Naive thymus-derived CD4-positive, alpha-beta T cell (primary cell): ENCODE measurements at regions of chr15 and their contacts with region 1.

Region 1: DNA sequence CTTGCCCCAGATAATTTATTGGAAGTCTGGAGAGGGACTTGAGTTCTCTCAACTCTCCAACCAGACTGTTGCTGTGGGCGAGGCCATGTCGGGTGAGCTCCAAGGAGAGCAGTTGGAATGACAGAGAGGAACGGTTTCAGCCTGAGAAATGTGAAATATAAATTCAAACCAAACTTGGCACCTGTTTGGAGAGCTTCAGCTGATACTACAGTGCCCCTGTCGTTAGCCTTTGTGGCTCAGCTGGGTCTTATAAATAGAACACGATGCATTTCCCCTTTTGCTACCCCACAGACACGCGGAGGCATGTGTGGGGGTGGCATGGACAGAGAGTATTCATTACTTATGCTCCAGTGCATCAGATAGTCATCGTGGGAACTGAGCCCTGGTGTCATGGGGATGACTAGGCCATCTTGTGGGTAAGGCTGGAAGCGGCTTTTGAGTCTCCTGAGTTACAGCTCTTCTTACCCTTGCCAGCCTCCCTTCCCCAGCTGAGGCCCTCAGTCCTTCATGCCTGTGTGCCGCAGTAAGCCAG is 15.6 kb downstream of the SMAD3 start:
- DNase-seq: peak in 1 of 9 donors; percentile 63
- ATAC-seq: peak; percentile 75
- H3K4me3 ChIP-seq: no peak overlapping the region
- H3K4me3 Mint-ChIP-seq: peak overlapping the region; percentile 6 to 98 (median 46)
- H3K27ac ChIP-seq: no peak overlapping the region
- H3K27ac Mint-ChIP-seq: peak overlapping the region; percentile 55 to 95 (median 81)
- H3K4me1 ChIP-seq: peaks cover 69 to 89% of the 10 kb centered on the region in 2 donors
- H3K4me1 Mint-ChIP-seq: peaks cover 56 to 96% (median 94%) of the 10 kb centered on the region in 7 donors
- H3K27me3 ChIP-seq: no peaks in the 10 kb centered on the region
- H3K27me3 Mint-ChIP-seq: no peaks in the 10 kb centered on the region

Region 2: DNA sequence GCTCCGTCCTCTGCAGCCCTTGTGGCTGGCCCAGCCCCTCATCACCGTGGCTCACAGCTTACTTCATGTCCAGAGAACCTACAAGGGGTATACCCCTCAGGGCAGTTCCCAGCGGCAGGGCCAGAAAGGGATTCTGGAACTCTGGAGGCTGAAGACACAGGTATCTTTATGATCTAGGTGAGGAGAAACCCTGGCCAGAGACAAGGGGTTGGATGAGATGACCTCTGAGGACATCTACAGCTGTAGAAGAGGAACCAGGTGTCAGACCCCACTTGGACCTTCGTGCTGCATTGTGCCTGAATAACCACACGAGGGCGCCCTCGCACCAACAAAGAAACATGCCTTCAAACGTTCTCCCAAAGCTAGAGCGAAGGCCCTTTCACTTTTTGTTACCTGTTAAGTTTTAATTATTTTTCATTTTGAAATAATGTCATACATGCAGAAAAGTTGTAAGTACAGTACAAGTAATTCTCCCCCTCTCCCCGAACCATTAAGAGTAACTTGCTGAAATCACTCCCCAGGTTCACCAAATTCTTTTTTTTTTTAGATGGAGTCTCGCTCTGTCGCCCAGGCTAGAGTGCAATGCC is 134.3 kb before region 1 on chr15:
- CTCF ChIA-PET with region 1: no interaction called
- POLR2A ChIA-PET with region 1: no interaction called
- intact Hi-C with region 1: loop called in 1 of 2 experiments (anchors 2 kb)
- DNase-seq: peak; percentile 50 to 78 (median 68)
- ATAC-seq: peak; percentile 86
- H3K4me3 ChIP-seq: no peak overlapping the region
- H3K4me3 Mint-ChIP-seq: peak overlapping the region in 2 of 10 donors; percentile 17
- H3K27ac ChIP-seq: no peak overlapping the region
- H3K27ac Mint-ChIP-seq: no peak overlapping the region
- H3K4me1 ChIP-seq: no peaks in the 10 kb centered on the region
- H3K4me1 Mint-ChIP-seq: peaks cover 0 to 26% (median 4%) of the 10 kb centered on the region in 7 donors
- H3K27me3 ChIP-seq: no peaks in the 10 kb centered on the region
- H3K27me3 Mint-ChIP-seq: peaks cover 0 to 9% (median 0%) of the 10 kb centered on the region in 5 donors

Region 3: GRCh38 chr15:67033571-67034044 is 47.4 kb before region 1 on chr15:
- CTCF ChIA-PET with region 1: no interaction called
- POLR2A ChIA-PET with region 1: interaction called, 3 read pairs
- intact Hi-C with region 1: loop called in 1 of 2 experiments (anchors 5 kb)
- DNase-seq: peak in 6 of 9 donors; percentile 10 to 35 (median 24)
- ATAC-seq: peak; percentile 56
- H3K4me3 ChIP-seq: peak overlapping the region; percentile 41
- H3K4me3 Mint-ChIP-seq: peak overlapping the region in 6 of 10 donors; percentile 30 to 75 (median 68)
- H3K27ac ChIP-seq: no peak overlapping the region
- H3K27ac Mint-ChIP-seq: peak overlapping the region in 3 of 9 donors; percentile 20 to 41 (median 20)
- H3K4me1 ChIP-seq: peaks cover 4 to 12% of the 10 kb centered on the region in 2 donors
- H3K4me1 Mint-ChIP-seq: peaks cover 3 to 24% (median 14%) of the 10 kb centered on the region in 7 donors
- H3K27me3 ChIP-seq: no peaks in the 10 kb centered on the region
- H3K27me3 Mint-ChIP-seq: peaks cover 0 to 16% (median 0%) of the 10 kb centered on the region in 5 donors

Region 4: DNA sequence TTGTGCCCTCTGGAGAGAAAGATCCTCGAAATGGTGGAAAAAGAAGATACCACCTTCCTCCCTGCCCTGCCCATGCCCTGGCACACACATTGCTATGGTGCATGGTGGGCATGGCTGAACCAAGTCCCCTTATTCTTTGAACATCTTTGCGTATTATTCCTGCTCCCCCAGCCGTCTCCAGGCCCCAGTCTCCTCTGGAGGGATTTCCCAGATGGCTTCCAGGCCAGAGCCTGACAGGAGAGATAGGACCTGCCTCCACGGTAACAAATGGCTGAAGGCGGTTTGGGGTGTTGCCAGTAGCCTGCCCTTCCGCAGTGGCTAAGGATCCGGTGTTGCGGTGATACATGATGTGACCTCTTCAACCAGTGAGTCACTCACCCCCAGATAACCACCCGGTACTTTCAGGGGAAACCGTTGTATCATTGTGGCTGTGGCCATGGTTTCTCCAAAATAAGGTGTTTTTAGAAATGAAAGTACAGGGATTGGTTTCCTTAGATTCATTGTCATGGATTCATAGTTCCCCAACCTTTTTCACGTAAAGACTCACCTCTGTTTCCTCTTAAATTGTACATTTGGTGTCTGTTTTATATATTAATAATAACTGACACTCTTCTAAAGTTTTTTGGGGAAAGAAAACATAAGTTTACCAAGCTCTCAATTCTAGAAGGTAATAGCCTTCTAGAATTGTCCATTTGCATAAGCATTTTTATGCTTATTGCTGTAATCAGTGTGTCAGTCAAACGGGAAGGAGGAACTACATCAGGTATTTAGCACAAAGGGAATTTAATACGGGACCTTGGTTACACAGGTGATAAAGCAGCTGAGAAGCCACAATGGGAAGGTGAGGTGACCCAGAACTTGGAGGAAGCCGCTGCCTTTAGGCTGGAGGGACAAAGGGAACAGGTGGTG is 10.4 kb after region 1 on chr15:
- CTCF ChIA-PET with region 1: interaction called, 3 read pairs
- POLR2A ChIA-PET with region 1: interaction called, 16 read pairs
- intact Hi-C with region 1: loop called in 1 of 2 experiments (anchors 1 kb)
- DNase-seq: peak in 2 of 9 donors; percentile 31 to 79
- ATAC-seq: peak; percentile 89
- H3K4me3 ChIP-seq: no peak overlapping the region
- H3K4me3 Mint-ChIP-seq: peak overlapping the region in 2 of 10 donors; percentile 10 to 89
- H3K27ac ChIP-seq: no peak overlapping the region
- H3K27ac Mint-ChIP-seq: peak overlapping the region in 3 of 9 donors; percentile 41 to 96 (median 62)
- H3K4me1 ChIP-seq: peaks cover 38 to 73% of the 10 kb centered on the region in 2 donors
- H3K4me1 Mint-ChIP-seq: peaks cover 41 to 99% (median 75%) of the 10 kb centered on the region in 7 donors
- H3K27me3 ChIP-seq: no peaks in the 10 kb centered on the region
- H3K27me3 Mint-ChIP-seq: no peaks in the 10 kb centered on the region

Region 5: DNA sequence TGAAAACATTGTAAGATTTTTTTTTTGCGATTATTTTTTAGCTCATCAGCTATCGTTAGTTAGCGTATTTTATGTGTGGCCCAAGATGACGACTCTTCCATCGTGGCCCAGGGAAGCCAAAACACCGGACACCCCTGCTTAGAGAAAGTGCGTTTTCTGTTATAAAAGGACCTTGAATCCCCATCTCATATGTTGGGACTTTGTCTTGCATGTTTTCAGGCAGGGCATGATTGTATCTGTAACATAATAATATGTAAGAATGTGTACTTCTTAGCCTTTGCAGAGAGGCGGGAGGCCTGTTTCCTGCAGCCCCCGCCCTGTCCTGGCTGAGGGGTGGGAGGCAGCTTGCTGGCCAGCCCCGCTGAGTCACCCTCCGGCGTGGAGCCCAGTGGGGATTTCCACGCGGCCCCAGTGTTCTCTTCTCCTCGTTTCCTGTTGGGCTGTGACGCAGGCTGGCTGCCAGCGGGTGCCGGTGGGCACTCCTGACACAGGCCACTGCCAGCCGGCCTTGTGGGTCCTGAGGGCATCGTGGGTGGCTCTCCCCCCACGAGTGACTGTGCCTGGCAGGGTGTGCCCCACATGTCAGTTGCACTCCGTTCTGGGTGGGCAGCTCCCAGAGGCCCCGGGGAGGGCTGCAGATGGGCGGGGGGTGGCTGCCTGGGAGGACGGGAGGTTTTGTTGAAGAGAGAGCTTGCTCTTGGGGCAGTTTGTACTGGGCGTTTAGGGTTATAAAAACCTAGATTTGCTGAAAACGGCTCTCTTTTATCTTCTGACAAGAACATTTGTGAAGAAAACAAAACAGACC is 40.1 kb after region 1 on chr15:
- CTCF ChIA-PET with region 1: interaction called, 3 read pairs
- POLR2A ChIA-PET with region 1: interaction called, 6 read pairs
- intact Hi-C with region 1: loop called in 1 of 2 experiments (anchors 2 kb)
- DNase-seq: peak; percentile 54 to 90 (median 71)
- ATAC-seq: peak; percentile 93
- H3K4me3 ChIP-seq: peak overlapping the region; percentile 48
- H3K4me3 Mint-ChIP-seq: peak overlapping the region; percentile 78 to 90 (median 84)
- H3K27ac ChIP-seq: peak overlapping the region; percentile 78
- H3K27ac Mint-ChIP-seq: peak overlapping the region; percentile 88 to 97 (median 95)
- H3K4me1 ChIP-seq: peaks cover 58 to 66% of the 10 kb centered on the region in 2 donors
- H3K4me1 Mint-ChIP-seq: peaks cover 53 to 95% (median 82%) of the 10 kb centered on the region in 7 donors
- H3K27me3 ChIP-seq: no peaks in the 10 kb centered on the region
- H3K27me3 Mint-ChIP-seq: no peaks in the 10 kb centered on the region

Region 6: GRCh38 chr15:67134067-67134838 is 53.3 kb after region 1 on chr15:
- CTCF ChIA-PET with region 1: interaction called, 4 read pairs
- POLR2A ChIA-PET with region 1: interaction called, 3 read pairs
- intact Hi-C with region 1: loop called in 1 of 2 experiments (anchors 1 kb)
- DNase-seq: peak; percentile 29 to 82 (median 78)
- ATAC-seq: peak; percentile 97
- H3K4me3 ChIP-seq: peak overlapping the region; percentile 41
- H3K4me3 Mint-ChIP-seq: peak overlapping the region; percentile 77 to 95 (median 85)
- H3K27ac ChIP-seq: peak overlapping the region; percentile 91
- H3K27ac Mint-ChIP-seq: peak overlapping the region; percentile 96 to 100 (median 98)
- H3K4me1 ChIP-seq: peaks cover 46 to 72% of the 10 kb centered on the region in 2 donors
- H3K4me1 Mint-ChIP-seq: peaks cover 41 to 93% (median 88%) of the 10 kb centered on the region in 7 donors
- H3K27me3 ChIP-seq: no peaks in the 10 kb centered on the region
- H3K27me3 Mint-ChIP-seq: no peaks in the 10 kb centered on the region

Region 7: DNA sequence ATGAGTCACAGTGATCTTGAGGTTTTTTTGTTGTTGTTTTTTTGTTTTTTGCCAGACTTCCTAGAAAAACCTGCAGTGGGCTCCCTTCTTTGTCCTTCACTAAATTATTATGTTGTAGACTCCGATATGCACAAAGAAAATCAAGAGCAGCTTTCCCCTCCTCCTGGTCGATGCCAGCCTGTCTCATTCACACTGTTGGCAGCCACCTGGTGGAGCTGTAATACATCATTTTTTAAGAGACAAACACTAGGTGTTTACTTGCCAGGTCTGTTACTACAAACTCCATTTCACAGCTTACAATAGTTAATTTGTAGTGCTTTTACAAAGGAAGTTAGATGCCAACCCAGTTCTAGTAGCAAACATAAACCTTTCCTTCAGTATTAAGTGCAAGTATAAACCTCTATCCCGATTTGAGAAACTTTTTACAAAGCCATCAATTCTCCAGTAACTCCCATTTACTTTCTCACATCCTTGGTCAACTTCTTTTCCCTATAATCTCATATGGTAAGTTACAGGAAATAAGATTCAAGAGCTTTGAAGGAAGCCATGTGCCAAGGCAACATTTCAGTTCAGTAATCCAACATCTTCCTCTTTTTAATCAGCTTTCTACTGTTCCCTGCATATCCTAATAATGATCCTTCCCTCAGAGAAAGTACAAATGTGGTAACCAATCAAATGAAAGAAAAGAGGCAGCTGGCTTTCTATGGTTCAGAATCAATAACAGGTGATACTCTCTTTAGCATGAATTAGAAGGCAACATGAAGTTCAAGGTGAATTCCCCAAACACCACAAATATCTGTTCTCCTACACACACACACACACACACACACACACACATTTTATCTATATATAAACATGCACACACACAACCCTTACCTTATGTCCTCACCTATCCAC is 159.5 kb after region 1 on chr15:
- CTCF ChIA-PET with region 1: no interaction called
- POLR2A ChIA-PET with region 1: no interaction called
- intact Hi-C with region 1: loop called in 1 of 2 experiments (anchors 5 kb)
- DNase-seq: peak in 3 of 9 donors; percentile 9 to 30 (median 12)
- ATAC-seq: peak; percentile 70
- H3K4me3 ChIP-seq: peak overlapping the region; percentile 23
- H3K4me3 Mint-ChIP-seq: peak overlapping the region in 9 of 10 donors; percentile 18 to 71 (median 45)
- H3K27ac ChIP-seq: no peak overlapping the region
- H3K27ac Mint-ChIP-seq: peak overlapping the region in 8 of 9 donors; percentile 46 to 88 (median 70)
- H3K4me1 ChIP-seq: peaks cover 16 to 34% of the 10 kb centered on the region in 2 donors
- H3K4me1 Mint-ChIP-seq: peaks cover 34 to 67% (median 56%) of the 10 kb centered on the region in 7 donors
- H3K27me3 ChIP-seq: no peaks in the 10 kb centered on the region
- H3K27me3 Mint-ChIP-seq: no peaks in the 10 kb centered on the region